ENCODE measurements at regions of chr1 and their contacts with region 1.

Region 1: DNA sequence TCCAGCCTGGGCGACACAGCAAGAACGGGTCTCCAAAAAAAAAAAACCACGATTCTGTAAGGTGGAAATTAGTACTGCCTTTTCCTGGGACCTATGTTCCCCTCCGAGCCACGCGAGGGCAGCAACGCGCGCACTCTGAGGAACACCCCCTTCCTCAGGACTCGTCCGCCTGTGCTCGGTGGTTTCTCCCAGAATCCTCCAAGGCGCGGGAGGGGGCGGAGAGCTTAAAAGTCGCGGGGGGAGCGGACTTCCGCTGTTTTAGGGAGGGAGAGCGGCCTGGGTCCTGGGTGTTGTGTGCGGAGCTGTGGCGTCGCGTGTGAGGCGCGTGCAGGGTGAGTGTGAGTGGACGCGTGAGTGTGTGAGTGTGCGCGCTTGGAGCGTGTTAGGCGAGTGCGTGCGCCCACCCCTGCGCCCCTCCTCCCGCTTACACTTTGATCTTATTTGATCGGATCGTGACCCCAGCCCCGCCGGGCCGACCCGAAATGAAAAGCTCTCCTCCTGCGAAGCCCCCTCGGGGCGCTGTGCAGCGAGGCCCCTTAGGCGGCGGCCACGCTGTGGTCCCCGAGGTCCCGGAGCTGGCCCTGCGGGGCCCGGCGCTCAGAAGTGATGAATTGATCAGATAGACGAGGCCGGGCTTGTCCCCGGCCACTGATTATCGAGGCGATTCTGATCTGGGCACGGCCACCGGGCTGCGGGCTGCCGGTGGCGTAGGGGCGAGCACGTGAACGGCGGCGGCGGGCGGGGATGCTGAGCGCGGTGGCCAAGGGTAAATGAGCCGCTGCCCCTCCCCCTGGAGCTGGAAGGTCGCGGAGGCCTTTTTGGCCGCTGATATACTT is 9.6 kb downstream of the TMEM167B start:
- DNase-seq: peak; percentile 90 to 98 (median 97)
- ATAC-seq: peak; percentile 98
- H3K4me3 ChIP-seq: peak overlapping the region; percentile 80
- H3K4me3 Mint-ChIP-seq: peak overlapping the region; percentile 93 to 99 (median 98)
- H3K27ac ChIP-seq: peak overlapping the region; percentile 88
- H3K27ac Mint-ChIP-seq: peak overlapping the region; percentile 92 to 99 (median 96)
- H3K4me1 ChIP-seq: peaks cover 0 to 5% of the 10 kb centered on the region in 2 donors
- H3K4me1 Mint-ChIP-seq: peaks cover 5 to 22% (median 13%) of the 10 kb centered on the region in 7 donors
- H3K27me3 ChIP-seq: no peaks in the 10 kb centered on the region
- H3K27me3 Mint-ChIP-seq: peaks cover 0 to 2% (median 0%) of the 10 kb centered on the region in 5 donors

Region 2: GRCh38 chr1:108892356-108893140 is 207.6 kb before region 1 on chr1:
- CTCF ChIA-PET with region 1: no interaction called
- POLR2A ChIA-PET with region 1: no interaction called
- intact Hi-C with region 1: no loop called
- DNase-seq: no peak
- ATAC-seq: no peak
- H3K4me3 ChIP-seq: no peak overlapping the region
- H3K4me3 Mint-ChIP-seq: no peak overlapping the region
- H3K27ac ChIP-seq: no peak overlapping the region
- H3K27ac Mint-ChIP-seq: no peak overlapping the region
- H3K4me1 ChIP-seq: no peaks in the 10 kb centered on the region
- H3K4me1 Mint-ChIP-seq: peaks cover 0 to 11% (median 0%) of the 10 kb centered on the region in 7 donors
- H3K27me3 ChIP-seq: no peaks in the 10 kb centered on the region
- H3K27me3 Mint-ChIP-seq: peaks cover 0 to 29% (median 19%) of the 10 kb centered on the region in 5 donors

Region 3: DNA sequence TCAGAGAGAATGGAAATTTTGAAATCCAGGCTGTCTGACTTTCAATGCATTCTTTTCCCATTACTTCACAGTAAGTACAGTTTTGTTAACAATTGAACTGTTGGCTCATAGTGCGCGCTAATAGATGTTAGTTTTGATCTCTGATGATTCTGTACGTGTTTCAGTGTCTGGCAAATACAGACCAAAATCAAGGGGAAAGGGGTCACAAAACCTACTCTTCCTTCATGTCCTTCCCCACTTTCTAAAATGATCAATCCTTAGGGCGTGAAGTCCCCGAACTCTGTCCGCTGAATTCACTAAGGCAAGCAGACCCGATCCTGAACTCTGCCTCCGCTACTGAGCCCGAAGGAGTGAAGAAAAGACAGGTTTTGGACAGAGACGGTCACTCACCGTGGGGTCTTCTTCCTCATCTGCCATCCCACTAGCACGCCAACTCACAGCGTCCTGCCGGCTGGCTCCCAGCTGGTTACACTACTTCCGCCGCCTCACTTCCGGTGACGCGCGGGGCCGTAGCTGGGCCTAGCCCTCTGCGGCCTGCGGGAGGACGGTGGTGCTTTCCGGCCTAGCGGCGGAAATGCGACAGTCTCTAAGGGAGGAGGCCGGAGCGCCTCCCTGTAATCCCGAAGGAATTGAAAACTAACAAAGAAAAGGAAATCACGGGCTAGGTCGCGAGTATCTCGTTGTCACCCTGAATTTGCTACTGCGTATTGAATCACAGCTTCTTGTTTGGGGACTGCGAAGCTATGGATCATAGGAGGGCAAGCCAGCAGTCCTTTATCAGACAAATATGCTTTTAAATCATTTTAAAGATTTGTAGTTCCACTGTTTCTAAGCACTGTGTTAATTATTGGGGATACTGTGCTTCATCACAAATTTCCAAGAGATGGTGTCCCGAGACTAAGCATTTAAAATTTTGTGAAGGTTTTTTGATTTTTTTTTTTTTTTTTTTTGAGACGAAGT is 24.3 kb before region 1 on chr1 and contains the start of gene TAF13:
- CTCF ChIA-PET with region 1: interaction called, 5 read pairs
- POLR2A ChIA-PET with region 1: interaction called, 59 read pairs
- intact Hi-C with region 1: loop called (anchors 1 kb)
- DNase-seq: peak; percentile 75 to 89 (median 84)
- ATAC-seq: peak; percentile 100
- H3K4me3 ChIP-seq: peak within 1 kb of the TSS; percentile 80
- H3K4me3 Mint-ChIP-seq: peak within 1 kb of the TSS; percentile 89 to 99 (median 98)
- H3K27ac ChIP-seq: peak within 1 kb of the TSS; percentile 92
- H3K27ac Mint-ChIP-seq: peak within 1 kb of the TSS; percentile 95 to 100 (median 99)
- H3K4me1 ChIP-seq: peaks cover 5 to 8% of the 10 kb centered on the region in 2 donors
- H3K4me1 Mint-ChIP-seq: peaks cover 13 to 28% (median 20%) of the 10 kb centered on the region in 7 donors
- H3K27me3 ChIP-seq: no peaks in the 10 kb centered on the region
- H3K27me3 Mint-ChIP-seq: no peaks in the 10 kb centered on the region
- total RNA-seq, gene TAF13: 11.0 to 23.6 (median 17.6) TPM

Region 4: DNA sequence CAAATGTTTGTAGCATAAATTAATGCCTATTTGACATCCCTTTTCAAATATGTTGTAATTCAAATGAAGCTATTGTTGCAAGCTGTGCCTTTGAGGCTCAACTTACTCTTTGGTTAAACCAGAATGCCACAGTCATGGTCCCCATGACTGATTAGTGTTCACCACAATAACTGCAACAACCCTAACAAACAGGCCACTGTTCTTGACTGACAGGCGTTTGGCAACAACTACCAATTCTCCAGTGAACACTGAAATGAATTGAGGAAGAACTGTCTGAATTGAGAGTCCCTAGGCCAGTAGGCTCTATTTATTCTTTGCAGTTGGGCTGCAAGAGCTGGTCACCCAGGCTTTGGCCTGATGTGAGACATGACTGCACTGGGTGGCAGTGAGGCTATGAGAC is 16.2 kb before region 1 on chr1:
- CTCF ChIA-PET with region 1: interaction called, 3 read pairs
- POLR2A ChIA-PET with region 1: interaction called, 59 read pairs
- intact Hi-C with region 1: no loop called
- DNase-seq: no peak
- ATAC-seq: no peak
- H3K4me3 ChIP-seq: no peak overlapping the region
- H3K4me3 Mint-ChIP-seq: no peak overlapping the region
- H3K27ac ChIP-seq: no peak overlapping the region
- H3K27ac Mint-ChIP-seq: no peak overlapping the region
- H3K4me1 ChIP-seq: no peaks in the 10 kb centered on the region
- H3K4me1 Mint-ChIP-seq: peaks cover 0 to under 1% (median 0%) of the 10 kb centered on the region in 7 donors
- H3K27me3 ChIP-seq: no peaks in the 10 kb centered on the region
- H3K27me3 Mint-ChIP-seq: no peaks in the 10 kb centered on the region

Region 5: DNA sequence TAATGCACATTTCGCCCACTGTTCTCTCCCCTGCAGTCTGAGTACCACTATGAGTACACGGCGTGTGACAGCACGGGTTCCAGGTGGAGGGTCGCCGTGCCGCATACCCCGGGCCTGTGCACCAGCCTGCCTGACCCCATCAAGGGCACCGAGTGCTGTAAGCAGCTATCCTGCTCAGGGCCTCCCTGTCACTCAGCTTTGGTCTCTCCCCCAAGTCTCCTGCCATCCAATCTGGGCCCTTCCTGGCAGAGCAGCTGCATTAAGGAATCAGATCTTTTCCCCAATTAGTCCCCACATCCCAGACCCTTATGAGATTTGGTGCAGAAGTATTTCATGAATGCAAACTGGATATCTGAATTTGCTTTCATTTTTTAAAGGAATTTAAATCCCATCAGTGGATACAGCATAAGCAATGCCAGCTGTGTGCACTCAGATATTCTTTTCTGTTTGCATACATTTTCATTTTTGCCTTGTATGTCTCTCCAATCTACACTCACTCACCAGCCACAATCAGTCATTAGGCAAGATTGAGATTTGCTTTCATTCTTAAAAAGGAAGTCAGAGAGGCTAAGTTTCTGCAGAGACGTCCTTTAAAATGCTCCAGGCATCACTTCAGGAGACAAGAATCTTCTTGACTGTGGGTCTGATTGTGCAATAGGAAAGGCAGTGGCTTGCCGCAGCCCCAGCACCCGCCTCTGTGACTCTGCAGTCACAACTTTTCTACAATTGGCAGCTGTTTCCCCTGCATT is 61.9 kb after region 1 on chr1:
- CTCF ChIA-PET with region 1: no interaction called
- POLR2A ChIA-PET with region 1: no interaction called
- intact Hi-C with region 1: loop called in 1 of 2 experiments (anchors 1 kb)
- DNase-seq: peak in 5 of 9 donors; percentile 5 to 45 (median 12)
- ATAC-seq: peak; percentile 88
- H3K4me3 ChIP-seq: no peak overlapping the region
- H3K4me3 Mint-ChIP-seq: peak overlapping the region in 6 of 10 donors; percentile 31 to 72 (median 52)
- H3K27ac ChIP-seq: no peak overlapping the region
- H3K27ac Mint-ChIP-seq: peak overlapping the region in 8 of 9 donors; percentile 58 to 87 (median 75)
- H3K4me1 ChIP-seq: peaks cover 0 to 14% of the 10 kb centered on the region in 2 donors
- H3K4me1 Mint-ChIP-seq: peaks cover 9 to 24% (median 18%) of the 10 kb centered on the region in 7 donors
- H3K27me3 ChIP-seq: no peaks in the 10 kb centered on the region
- H3K27me3 Mint-ChIP-seq: no peaks in the 10 kb centered on the region